Gastrocnemius medialis (tissue), 4 donors: ENCODE measurements at regions of chr15 and their contacts with region 1.

Region 1: DNA sequence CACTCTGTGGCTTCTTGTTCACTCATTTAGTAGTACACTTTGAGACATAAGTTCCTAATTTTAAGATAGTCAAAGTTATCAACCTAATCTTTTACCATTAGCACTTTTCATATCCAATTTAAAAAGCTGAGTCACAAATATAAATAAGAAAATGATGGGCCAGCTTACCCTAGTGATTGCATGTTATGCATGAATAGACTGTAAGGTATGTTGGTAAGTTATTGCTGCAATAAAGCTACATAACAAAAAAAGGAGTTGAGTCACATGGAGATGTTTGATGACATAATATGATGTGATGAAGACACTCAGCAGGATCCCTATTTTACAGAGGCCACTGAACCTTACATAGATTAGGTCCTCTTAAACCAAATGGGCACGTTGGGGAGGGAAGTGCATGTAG is 161.3 kb downstream of the OCA2 start:
- DNase-seq: no peak
- ATAC-seq: no peak
- H3K4me3 ChIP-seq: no peak overlapping the region
- H3K27ac ChIP-seq: no peak overlapping the region
- H3K4me1 ChIP-seq: no peaks in the 10 kb centered on the region
- H3K27me3 ChIP-seq: no peaks in the 10 kb centered on the region
- CTCF ChIP-seq: no peak
- POLR2A ChIP-seq: no peak

Region 2: GRCh38 chr15:27648359-27648758 is 289.5 kb before region 1 on chr15:
- in situ Hi-C with region 1: no loop called
- intact Hi-C with region 1: no loop called
- DNase-seq: no peak
- ATAC-seq: no peak
- H3K4me3 ChIP-seq: no peak overlapping the region
- H3K27ac ChIP-seq: no peak overlapping the region
- H3K4me1 ChIP-seq: no peaks in the 10 kb centered on the region
- H3K27me3 ChIP-seq: no peaks in the 10 kb centered on the region
- CTCF ChIP-seq: no peak
- POLR2A ChIP-seq: no peak

Region 3: GRCh38 chr15:27990521-27991515 is 53.0 kb after region 1 on chr15:
- in situ Hi-C with region 1: no loop called
- intact Hi-C with region 1: loop called (anchors 10 kb)
- DNase-seq: no peak
- ATAC-seq: no peak
- H3K4me3 ChIP-seq: no peak overlapping the region
- H3K27ac ChIP-seq: no peak overlapping the region
- H3K4me1 ChIP-seq: no peaks in the 10 kb centered on the region
- H3K27me3 ChIP-seq: no peaks in the 10 kb centered on the region
- CTCF ChIP-seq: no peak
- POLR2A ChIP-seq: no peak

Region 4: DNA sequence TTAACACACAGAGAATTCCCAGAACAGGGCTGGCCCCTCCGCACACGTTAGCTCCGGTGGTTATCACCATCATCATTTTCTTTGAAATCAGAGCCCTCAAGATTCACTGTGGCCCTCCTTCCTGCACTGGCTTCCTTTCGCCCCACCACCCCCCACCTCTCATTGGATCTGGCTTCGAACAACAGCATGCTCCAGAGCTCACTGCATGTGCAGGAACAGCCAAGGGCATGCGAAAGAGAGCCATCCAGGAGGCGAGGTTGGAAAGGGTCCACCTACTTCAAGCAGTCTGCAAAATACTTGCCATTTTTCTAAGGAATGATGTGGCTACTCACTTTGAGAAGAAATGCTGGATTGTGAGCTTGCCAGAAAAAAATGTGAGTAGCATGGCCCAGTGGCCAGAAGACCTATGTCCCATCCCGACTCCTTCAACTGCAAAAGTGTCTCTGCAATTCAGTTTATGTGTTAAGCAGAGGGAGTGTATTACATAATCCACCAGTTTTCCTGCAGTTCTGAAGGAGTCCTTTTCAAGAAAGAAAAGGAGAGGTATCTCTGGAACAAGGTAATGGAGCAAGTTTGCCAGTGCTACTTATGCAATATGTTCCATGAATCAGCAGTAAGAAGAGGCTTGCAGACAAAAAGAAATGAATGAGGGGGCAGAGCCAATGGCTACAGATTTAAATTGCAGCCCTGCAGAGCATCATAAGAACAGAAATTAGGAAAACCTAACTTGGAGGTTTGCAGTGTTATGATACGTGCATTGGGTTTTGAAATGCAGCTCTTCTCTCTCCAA is 68.5 kb after region 1 on chr15:
- in situ Hi-C with region 1: no loop called
- intact Hi-C with region 1: no loop called
- DNase-seq: no peak
- ATAC-seq: no peak
- H3K4me3 ChIP-seq: no peak overlapping the region
- H3K27ac ChIP-seq: no peak overlapping the region
- H3K4me1 ChIP-seq: no peaks in the 10 kb centered on the region
- H3K27me3 ChIP-seq: no peaks in the 10 kb centered on the region
- CTCF ChIP-seq: no peak
- POLR2A ChIP-seq: no peak